ENCODE measurements at regions of chr7 and their contacts with region 1.

Region 1: DNA sequence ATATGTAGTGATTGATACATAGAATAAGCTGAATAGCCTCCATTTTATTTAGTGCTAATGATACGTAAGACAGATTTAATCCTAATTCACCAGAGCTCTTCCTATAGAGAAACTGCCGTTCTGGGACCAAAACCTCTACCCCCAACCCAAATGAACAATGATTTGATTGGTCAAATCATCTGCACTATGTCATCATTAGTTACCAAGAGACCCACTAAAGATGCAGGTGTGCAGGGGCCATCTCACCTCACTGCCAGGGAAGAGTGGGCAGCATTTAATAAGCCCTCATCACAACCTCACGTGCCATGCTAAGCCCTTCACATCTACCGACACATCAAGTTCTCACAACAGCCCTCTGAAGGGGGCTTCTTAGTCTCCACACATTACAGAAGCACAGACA is 87.0 kb downstream of the VIPR2 start:
- DNase-seq: no peak
- ATAC-seq: no peak
- H3K4me3 ChIP-seq: no peak overlapping the region
- H3K27ac ChIP-seq: no peak overlapping the region
- H3K4me1 ChIP-seq: no peaks in the 10 kb centered on the region
- H3K27me3 ChIP-seq: peaks cover 0 to 4% (median 0%) of the 10 kb centered on the region in 7 donors
- CTCF ChIP-seq: no peak

Region 2: GRCh38 chr7:159035571-159036073 is 22.0 kb before region 1 on chr7:
- intact Hi-C with region 1: loop called in 1 of 10 experiments (anchors 1 kb)
- DNase-seq: no peak
- ATAC-seq: no peak
- H3K4me3 ChIP-seq: no peak overlapping the region
- H3K27ac ChIP-seq: no peak overlapping the region
- H3K4me1 ChIP-seq: peaks cover 0 to 23% (median 13%) of the 10 kb centered on the region in 9 donors
- H3K27me3 ChIP-seq: peaks cover 0 to 13% (median 0%) of the 10 kb centered on the region in 7 donors
- CTCF ChIP-seq: no peak